A673 (cell line): ENCODE measurements at regions of chr1 and their contacts with region 1.

Region 1: GRCh38 chr1:211323156-211324063 is 3.2 kb upstream of the TRAF5 start:
- DNase-seq: peak; percentile 83
- H3K4me3 ChIP-seq: no peak overlapping the region
- H3K27ac ChIP-seq: no peak overlapping the region
- H3K4me1 ChIP-seq: no peaks in the 10 kb centered on the region
- H3K27me3 ChIP-seq: no peaks in the 10 kb centered on the region
- CTCF ChIP-seq: peak; percentile 88

Region 2: DNA sequence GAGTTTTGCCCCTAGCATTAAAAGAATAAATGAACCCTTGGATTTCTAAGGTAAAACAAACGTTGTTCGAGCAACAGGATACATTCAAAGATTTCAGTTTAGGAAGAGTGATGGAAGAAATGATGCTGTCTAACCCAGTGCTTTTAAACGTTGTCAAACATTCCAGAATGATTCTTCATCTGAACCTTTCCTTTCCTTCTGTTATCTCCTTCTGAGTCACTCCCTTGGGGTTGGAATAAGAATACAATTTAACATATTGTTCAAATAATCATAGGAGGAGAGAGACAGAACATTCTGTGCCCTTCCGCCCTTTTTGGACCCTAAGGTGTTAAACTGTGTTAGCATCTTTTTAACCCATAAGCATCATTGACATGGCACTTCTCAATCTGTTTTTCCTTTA is 125.3 kb before region 1 on chr1:
- CTCF ChIA-PET with region 1: no interaction called
- POLR2A ChIA-PET with region 1: no interaction called
- intact Hi-C with region 1: no loop called
- DNase-seq: no peak
- H3K4me3 ChIP-seq: no peak overlapping the region
- H3K27ac ChIP-seq: no peak overlapping the region
- H3K4me1 ChIP-seq: no peaks in the 10 kb centered on the region
- H3K27me3 ChIP-seq: peaks cover 15% of the 10 kb centered on the region
- CTCF ChIP-seq: no peak

Region 3: DNA sequence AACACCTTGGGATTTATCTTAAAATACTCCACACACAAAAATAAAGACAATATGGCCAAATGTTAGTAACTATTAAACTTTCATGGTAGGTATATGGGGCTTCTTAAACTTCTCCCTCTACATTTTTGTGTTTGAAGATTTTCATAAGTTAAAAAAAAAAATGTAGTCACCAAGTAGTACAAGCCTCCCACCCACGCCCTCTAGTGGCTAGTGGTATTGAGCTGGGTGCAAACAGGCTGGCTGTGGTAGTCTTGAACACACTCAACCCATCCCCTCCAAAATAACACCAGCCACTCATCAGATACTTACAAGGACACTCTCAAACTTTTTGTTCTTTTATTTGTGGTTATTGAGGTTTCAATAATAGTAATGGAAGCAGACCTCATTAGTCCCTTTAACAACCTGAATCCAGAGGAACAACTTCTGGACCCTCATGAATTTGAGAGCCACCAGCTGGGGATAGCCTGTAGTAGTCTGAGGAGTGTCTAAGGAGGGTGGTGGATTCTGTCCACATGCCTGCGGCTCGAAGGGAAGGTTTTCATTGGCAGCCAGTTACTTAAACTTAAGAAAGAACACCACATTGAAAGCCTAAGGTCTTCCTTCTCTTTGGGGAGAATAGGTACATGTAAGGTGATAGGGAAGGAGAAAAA is 152.9 kb after region 1 on chr1:
- CTCF ChIA-PET with region 1: interaction called, 11 read pairs
- POLR2A ChIA-PET with region 1: no interaction called
- intact Hi-C with region 1: loop called (anchors 1 kb)
- DNase-seq: peak; percentile 81
- H3K4me3 ChIP-seq: no peak overlapping the region
- H3K27ac ChIP-seq: no peak overlapping the region
- H3K4me1 ChIP-seq: no peaks in the 10 kb centered on the region
- H3K27me3 ChIP-seq: peaks cover 6% of the 10 kb centered on the region
- CTCF ChIP-seq: peak; percentile 95

Region 4: GRCh38 chr1:211514030-211514754 is 190.8 kb after region 1 on chr1:
- CTCF ChIA-PET with region 1: no interaction called
- POLR2A ChIA-PET with region 1: no interaction called
- intact Hi-C with region 1: loop called (anchors 1 kb)
- DNase-seq: peak; percentile 86
- H3K4me3 ChIP-seq: no peak overlapping the region
- H3K27ac ChIP-seq: no peak overlapping the region
- H3K4me1 ChIP-seq: no peaks in the 10 kb centered on the region
- H3K27me3 ChIP-seq: no peaks in the 10 kb centered on the region
- CTCF ChIP-seq: peak; percentile 82